Astrocyte of the cerebellum (primary cell): ENCODE measurements at regions of chr4 and their contacts with region 1.

Region 1: DNA sequence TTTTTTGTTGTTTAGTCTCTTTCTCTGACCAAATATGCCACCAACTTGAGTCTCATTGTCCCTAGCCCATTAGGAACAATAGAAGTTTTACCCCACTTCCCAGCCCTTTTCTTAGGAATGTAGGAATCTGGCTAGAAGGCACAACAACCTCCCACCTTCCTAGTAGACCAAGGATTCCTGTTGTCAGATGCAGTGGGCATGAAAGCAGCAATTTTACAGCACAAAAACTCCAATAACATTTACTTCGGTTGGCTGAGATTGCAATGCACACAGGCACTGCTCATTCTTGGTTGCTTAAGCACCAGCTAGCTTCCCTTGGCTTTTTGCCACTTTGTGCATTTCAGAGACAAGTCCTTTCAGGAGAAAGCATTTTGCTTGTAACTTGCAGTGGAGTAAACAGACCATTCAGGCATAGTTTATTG is 312.8 kb downstream of the TENM3 start:
- DNase-seq: peak; percentile 76
- H3K4me3 ChIP-seq: no peak overlapping the region
- CTCF ChIP-seq: no peak

Region 2: GRCh38 chr4:182492422-182492821 is 63.6 kb before region 1 on chr4:
- in situ Hi-C with region 1: loop called (anchors 10 kb)
- DNase-seq: peak; percentile 31
- H3K4me3 ChIP-seq: no peak overlapping the region
- CTCF ChIP-seq: no peak

Region 3: DNA sequence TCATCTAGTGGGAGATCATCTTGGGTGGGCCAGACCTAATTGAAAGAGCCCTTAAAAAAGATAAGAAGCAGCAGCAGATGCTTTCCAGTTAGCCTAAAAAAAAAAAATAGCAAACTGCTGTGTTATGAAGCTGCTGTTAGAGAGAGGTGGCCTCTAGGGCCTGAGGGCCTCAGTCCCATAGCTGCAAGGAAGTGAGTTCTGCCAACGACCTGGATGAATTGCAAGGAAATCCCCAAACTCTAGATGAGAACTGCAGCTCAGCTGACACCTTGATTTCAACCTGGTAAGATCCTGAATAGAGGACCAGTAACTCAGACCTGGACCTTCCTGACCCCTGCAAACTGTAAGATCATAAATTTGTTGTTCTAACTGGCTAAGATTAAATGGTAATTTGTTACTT is 37.6 kb before region 1 on chr4:
- in situ Hi-C with region 1: no loop called
- DNase-seq: no peak
- H3K4me3 ChIP-seq: no peak overlapping the region
- CTCF ChIP-seq: no peak

Region 4: GRCh38 chr4:182619660-182620059 is 63.7 kb after region 1 on chr4:
- in situ Hi-C with region 1: no loop called
- DNase-seq: no peak
- H3K4me3 ChIP-seq: no peak overlapping the region
- CTCF ChIP-seq: no peak

Region 5: DNA sequence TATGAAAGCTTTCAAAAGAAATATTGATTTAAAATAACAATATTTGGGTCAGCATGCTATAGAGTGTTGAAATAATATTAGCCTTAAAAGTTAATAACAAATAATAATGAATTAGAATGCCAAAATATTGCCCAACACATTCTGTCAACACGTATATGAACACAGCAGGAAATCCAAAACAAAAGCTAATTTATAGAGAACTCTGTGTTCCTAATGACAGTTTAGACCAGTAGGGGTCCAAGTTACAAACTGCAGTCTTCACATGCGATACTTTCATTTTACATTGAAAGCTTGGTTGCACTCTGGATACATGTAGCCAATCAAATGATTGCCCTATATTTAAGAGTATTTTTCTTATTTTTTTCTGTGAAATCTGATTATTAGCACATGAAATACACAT is 86.8 kb after region 1 on chr4:
- in situ Hi-C with region 1: no loop called
- DNase-seq: no peak
- H3K4me3 ChIP-seq: no peak overlapping the region
- CTCF ChIP-seq: peak; percentile 36